AG04449 (cell line): ENCODE measurements at regions of chr17 and their contacts with region 1.

Region 1: DNA sequence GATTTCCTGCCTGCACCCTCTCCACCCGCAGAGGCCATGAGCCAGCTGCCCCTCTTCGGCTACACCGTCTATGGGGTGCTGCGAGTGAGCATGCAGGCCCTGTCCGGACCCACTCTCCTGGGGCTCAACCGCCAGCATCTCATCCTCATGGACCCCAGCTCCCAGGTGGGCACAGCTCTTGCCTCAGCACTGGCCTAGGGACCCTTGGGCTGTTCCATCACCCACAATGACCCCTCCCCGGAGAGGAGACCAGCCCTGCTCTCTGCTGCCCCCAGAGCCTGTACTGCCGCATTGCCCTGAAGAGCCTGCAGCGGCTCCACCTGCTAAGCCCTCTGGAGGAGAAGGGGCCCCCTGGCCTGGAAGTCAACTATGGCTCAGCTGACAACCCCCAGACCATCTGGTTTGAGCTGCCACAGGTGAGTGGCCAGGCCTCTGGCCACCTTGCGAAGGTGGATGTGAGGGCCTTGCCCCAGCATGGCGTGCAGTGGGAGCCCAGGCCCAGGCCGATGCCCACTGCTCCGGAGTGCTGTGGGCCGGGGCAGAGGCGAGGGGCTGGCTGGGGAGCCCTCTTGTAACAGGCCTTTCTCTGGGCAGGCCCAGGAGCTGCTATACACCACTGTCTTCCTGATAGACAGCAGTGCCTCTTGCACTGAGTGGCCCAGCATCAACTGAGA is 7.3 kb upstream of the SMIM5 start:
- DNase-seq: no peak
- H3K4me3 ChIP-seq: no peak overlapping the region
- CTCF ChIP-seq: peak; percentile 71

Region 2: GRCh38 chr17:75440738-75441448 is 185.1 kb before region 1 on chr17:
- CTCF ChIA-PET with region 1: no interaction called
- POLR2A ChIA-PET with region 1: no interaction called
- DNase-seq: no peak
- H3K4me3 ChIP-seq: no peak overlapping the region
- CTCF ChIP-seq: no peak

Region 3: DNA sequence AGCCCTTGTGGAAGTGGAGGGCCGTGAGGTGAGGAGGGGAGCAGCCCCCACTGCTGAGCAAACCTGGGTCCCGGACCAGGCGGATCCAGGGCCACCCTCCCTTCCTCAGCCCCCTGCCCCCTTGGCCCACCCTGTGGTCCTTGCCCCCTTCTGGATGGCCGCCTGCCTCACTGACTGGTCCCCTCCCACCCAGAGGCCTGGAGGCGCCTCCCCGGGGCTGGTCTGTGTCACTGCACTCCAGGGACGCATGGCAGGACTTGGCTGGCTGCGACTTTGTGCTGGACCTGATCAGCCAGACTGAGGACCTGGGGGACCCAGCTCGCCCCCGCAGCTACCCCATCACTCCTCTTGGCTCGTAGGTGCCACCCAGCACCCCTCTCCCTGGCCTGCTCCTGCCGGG is 11.9 kb before region 1 on chr17:
- CTCF ChIA-PET with region 1: interaction called, 357 read pairs
- POLR2A ChIA-PET with region 1: no interaction called
- DNase-seq: no peak
- H3K4me3 ChIP-seq: no peak overlapping the region
- CTCF ChIP-seq: peak; percentile 13

Region 4: DNA sequence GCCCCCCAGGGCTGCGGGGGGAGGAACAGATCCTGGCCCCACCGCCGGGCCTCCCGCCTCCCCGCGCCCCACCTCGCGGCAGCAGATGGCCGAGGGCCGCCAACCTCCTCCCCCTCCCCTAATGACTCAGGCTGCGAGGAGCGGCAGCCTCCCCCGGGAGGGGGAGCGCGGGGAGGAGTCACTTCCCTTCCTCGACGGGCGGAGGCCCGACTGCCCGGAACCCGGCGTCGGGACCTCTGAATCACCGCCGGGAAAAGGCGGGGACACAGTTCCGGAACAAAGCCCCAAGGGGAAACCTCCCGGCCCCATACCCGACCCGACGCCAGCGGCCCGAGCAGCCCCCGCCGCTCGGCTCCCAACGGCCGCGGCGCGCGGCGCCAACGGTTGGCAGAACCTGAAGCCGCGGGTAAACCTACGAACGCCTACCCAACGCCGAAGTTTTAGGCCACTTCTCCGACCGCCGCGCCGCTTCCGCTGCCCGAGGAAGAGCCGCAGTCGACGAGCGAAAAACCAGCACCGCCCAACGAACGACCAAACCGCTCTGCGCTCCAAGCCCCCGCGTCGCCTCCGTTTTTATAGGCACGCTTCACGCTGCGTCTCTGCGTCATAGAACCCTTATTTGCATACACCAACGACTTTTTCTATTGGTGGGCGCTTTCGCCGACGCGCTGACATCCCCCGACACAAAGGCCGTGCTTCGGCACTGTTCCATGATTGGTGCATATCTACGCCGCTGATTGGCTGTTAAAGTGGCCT is 153.5 kb after region 1 on chr17:
- CTCF ChIA-PET with region 1: no interaction called
- POLR2A ChIA-PET with region 1: no interaction called
- DNase-seq: peak; percentile 98
- H3K4me3 ChIP-seq: peak overlapping the region; percentile 93
- CTCF ChIP-seq: no peak